ENCODE measurements at regions of chr5 and their contacts with region 1.

Region 1: GRCh38 chr5:126354012-126354857 is 69.0 kb upstream of the GRAMD2B start:
- DNase-seq: peak; percentile 38
- H3K4me3 ChIP-seq: peak overlapping the region; percentile 21 to 46; a peak in 3 of 4 replicates
- H3K27ac ChIP-seq: peak overlapping the region; percentile 93 to 98
- H3K4me1 ChIP-seq: peaks cover 0 to 20% of the 10 kb centered on the region in 2 experiments; a peak in 3 of 4 replicates
- H3K27me3 ChIP-seq: no peaks in the 10 kb centered on the region
- CTCF ChIP-seq: peak; percentile 68
- EP300 ChIP-seq: peak; percentile 73 to 100
- RAD21 ChIP-seq: peak; percentile 81

Region 2: DNA sequence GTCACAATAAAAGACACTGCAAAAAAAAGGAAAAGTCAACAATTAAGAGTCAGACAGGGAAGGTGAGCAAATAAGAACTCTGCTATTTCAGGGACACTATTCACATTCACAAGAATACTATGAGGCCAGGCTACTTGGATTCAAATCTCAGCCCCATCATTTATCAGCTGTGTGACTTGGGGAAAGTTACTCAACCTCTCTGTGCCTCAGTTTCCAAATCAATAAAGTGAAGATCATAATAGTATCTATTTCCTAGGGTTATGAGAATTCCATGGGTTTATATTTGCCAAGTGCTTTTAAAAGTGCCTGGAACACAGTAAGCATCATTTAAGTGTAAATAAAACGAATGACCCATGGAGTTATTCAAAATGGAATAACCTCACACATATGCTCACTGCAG is 184.3 kb after region 1 on chr5:
- CTCF ChIA-PET with region 1: interaction called, 39 read pairs
- POLR2A ChIA-PET with region 1: no interaction called
- DNase-seq: no peak
- H3K4me3 ChIP-seq: no peak overlapping the region
- H3K27ac ChIP-seq: peak overlapping the region in 1 of 2 experiments; percentile 66; a peak in 2 of 4 replicates
- H3K4me1 ChIP-seq: no peaks in the 10 kb centered on the region
- H3K27me3 ChIP-seq: no peaks in the 10 kb centered on the region
- CTCF ChIP-seq: no peak
- EP300 ChIP-seq: no peak
- RAD21 ChIP-seq: no peak

Region 3: GRCh38 chr5:126544087-126544740 is 190.0 kb after region 1 on chr5:
- CTCF ChIA-PET with region 1: interaction called, 39 read pairs
- POLR2A ChIA-PET with region 1: no interaction called
- DNase-seq: peak; percentile 30
- H3K4me3 ChIP-seq: no peak overlapping the region; a peak in 1 of 4 replicates
- H3K27ac ChIP-seq: no peak overlapping the region
- H3K4me1 ChIP-seq: no peaks in the 10 kb centered on the region
- H3K27me3 ChIP-seq: no peaks in the 10 kb centered on the region
- CTCF ChIP-seq: peak; percentile 68
- EP300 ChIP-seq: no peak
- RAD21 ChIP-seq: peak; percentile 58

Region 4: DNA sequence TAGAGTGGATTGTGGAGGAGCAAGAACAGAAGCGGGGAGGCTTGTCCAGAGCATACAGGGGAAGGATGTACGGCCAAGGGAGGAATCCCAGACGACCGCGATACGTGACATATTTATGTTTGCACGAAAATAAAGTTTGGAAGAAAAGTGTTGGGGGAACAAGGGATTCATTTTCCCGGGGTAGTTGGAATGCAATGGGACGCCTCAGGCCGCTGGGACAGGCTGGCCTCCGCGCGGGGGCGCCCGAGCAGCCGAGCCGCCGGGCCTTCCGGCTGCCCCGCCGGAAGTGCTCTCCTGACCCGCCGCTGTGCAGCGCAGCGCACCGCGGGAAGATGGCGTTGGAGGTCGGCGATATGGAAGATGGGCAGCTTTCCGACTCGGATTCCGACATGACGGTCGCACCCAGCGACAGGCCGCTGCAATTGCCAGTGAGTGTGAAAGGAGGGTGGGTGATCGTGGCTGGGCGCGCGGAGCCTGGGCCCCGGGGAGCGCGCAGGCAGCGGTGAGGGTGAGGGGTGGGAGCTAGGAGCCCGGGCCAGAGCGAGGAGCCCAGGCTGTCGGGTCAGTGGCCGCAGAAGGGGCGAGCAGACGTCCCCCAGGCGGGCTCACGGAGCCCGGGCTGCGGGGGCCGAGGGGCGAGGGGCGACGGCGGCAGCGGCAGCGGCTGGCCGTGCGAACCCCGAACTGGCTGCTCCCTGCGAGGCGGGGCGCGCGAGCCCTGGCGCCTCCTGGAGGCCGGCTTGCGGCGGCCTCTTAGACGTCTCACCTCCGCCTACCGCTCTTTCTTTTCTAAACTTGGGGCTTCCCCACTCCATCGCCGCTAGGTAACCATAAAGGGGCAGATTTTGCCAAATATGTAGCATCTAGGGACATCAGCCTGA is 246.6 kb after region 1 on chr5 and contains the start of gene PHAX:
- CTCF ChIA-PET with region 1: interaction called, 12 read pairs
- POLR2A ChIA-PET with region 1: no interaction called
- DNase-seq: peak; percentile 94
- H3K4me3 ChIP-seq: peak within 1 kb of the TSS; percentile 81 to 82
- H3K27ac ChIP-seq: peak within 1 kb of the TSS; percentile 81
- H3K4me1 ChIP-seq: peaks cover 6 to 8% of the 10 kb centered on the region in 2 experiments; a peak in 2 of 4 replicates
- H3K27me3 ChIP-seq: no peaks in the 10 kb centered on the region
- CTCF ChIP-seq: peak; percentile 74
- EP300 ChIP-seq: peak in 1 of 2 experiments; percentile 35; a peak in 1 of 4 replicates
- RAD21 ChIP-seq: peak; percentile 33
- polyA plus RNA-seq, gene PHAX: 25.1 and 27.4 TPM in 2 replicates